G401 (cell line): ENCODE measurements at regions of chr20 and their contacts with region 1.

Region 1: DNA sequence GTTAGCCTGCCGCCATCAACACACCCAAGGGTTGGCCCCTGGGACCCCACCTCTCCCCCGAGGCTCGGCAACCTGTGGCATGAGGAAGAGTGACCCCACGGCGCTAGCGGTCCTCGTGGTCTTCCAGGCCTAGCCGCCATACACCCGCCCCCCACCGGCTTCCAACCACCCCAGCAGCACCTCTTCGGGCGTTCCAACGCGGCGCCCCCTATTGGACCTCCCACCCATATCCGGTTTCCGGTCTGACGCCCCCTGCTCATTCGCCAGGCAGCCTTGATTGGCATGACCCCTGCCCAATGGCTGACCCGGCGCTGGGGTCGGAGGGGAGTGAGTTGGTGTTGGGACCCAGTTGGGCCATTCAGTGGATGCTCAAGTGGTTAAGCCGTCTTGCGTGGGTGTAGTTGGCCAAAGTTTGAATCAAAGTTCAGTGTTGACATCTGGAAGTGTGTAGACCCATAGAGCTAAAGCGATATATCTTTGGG is at the start of gene GNAS-AS1:
- DNase-seq: no peak
- total RNA-seq, gene GNAS-AS1: not detected in 2 replicates

Region 2: DNA sequence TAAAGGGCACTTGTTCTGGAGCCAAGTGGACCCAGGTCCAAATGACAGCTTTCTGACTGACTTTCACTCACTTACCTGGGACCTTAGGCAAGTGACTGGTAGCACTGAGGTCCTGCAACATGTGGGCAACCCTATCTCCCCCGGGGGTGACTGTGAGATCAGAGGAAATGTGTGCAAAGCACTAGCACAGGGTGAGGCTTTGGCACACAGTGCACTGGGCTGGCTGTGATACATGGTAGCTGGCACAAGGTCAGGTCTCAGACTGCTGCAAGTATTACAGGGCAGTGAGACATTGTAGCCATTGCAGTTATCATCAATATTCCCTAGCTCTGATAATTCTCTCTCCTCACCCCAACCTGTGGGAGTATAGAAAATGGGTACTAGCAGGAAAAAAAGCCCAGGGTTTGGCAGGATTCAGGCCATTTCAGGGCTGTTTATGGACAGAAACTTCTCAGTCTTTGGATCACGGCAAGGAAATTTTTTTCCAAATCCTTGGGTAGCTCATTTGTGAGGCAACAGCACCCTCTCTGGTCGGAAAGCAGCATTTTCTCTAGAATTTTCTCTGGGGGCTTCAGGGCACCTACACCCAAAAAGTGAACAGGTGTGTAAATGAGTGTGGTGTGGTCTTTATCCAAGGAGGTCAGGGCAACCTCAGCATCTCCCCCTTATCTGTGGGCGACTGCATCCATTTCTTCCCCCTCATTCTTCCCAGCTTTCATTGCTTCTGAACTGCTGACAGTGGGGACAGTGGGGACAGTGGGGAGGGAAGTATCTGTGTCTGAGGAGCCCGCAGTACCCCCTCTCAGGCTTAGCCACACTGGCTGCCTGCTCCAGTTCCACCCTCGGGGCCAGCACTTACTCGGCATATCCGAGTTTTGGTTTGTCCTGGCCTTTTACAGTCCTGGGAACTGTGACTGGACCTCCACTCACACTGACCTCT is 604.9 kb after region 1 on chr20:
- in situ Hi-C with region 1: loop called (anchors 25 kb)
- DNase-seq: peak; percentile 83